Psoas muscle (tissue), 8 donors: ENCODE measurements at regions of chrX and their contacts with region 1.

Region 1: GRCh38 chrX:13322804-13323203 is 3.0 kb upstream of the ATXN3L start:
- DNase-seq: no peak
- ATAC-seq: no peak
- H3K4me3 ChIP-seq: no peak overlapping the region
- H3K27ac ChIP-seq: no peak overlapping the region
- H3K4me1 ChIP-seq: no peaks in the 10 kb centered on the region
- H3K27me3 ChIP-seq: peaks cover 0 to 6% (median 0%) of the 10 kb centered on the region in 3 donors
- CTCF ChIP-seq: no peak

Region 2: DNA sequence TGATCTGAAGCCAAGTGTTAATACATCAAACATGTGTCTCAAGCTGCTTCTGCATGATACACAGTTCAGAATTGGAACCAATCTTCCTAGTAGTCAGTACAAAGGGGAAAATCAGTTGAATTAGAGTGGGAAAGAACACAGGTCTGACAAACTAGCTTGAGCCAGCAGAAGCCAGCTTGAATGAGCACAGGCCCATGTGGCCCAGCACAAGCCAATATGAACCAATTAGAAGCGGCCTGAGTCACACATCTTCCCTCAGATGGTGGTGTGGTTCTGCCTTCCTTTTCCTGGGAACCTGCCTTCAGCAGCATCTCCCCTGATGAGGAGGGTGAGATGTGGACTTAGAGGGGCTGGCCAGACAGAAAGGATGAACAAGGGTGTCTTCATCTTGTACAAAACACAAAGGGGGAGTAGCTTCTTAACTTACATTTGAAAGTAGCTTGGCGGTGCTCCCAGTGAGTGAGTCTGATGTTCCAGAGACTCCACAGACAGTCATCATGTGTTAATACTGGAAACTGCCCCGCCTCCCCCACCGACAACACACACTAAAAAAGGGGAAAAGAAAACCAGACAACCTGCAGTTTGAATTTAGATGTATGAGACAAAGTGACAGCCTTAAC is 1112.5 kb before region 1 on chrX:
- intact Hi-C with region 1: loop called in 1 of 2 experiments (anchors 10 kb)
- DNase-seq: peak in 1 of 2 donors; percentile 13
- ATAC-seq: no peak
- H3K4me3 ChIP-seq: no peak overlapping the region
- H3K27ac ChIP-seq: no peak overlapping the region
- H3K4me1 ChIP-seq: no peaks in the 10 kb centered on the region
- H3K27me3 ChIP-seq: no peaks in the 10 kb centered on the region
- CTCF ChIP-seq: no peak

Region 3: GRCh38 chrX:13120017-13120416 is 202.8 kb before region 1 on chrX:
- intact Hi-C with region 1: no loop called
- DNase-seq: no peak
- ATAC-seq: no peak
- H3K4me3 ChIP-seq: no peak overlapping the region
- H3K27ac ChIP-seq: no peak overlapping the region
- H3K4me1 ChIP-seq: no peaks in the 10 kb centered on the region
- H3K27me3 ChIP-seq: no peaks in the 10 kb centered on the region
- CTCF ChIP-seq: no peak